Dorsolateral prefrontal cortex (tissue), 120 donors: ENCODE measurements at regions of chr10 and their contacts with region 1.

Region 1: DNA sequence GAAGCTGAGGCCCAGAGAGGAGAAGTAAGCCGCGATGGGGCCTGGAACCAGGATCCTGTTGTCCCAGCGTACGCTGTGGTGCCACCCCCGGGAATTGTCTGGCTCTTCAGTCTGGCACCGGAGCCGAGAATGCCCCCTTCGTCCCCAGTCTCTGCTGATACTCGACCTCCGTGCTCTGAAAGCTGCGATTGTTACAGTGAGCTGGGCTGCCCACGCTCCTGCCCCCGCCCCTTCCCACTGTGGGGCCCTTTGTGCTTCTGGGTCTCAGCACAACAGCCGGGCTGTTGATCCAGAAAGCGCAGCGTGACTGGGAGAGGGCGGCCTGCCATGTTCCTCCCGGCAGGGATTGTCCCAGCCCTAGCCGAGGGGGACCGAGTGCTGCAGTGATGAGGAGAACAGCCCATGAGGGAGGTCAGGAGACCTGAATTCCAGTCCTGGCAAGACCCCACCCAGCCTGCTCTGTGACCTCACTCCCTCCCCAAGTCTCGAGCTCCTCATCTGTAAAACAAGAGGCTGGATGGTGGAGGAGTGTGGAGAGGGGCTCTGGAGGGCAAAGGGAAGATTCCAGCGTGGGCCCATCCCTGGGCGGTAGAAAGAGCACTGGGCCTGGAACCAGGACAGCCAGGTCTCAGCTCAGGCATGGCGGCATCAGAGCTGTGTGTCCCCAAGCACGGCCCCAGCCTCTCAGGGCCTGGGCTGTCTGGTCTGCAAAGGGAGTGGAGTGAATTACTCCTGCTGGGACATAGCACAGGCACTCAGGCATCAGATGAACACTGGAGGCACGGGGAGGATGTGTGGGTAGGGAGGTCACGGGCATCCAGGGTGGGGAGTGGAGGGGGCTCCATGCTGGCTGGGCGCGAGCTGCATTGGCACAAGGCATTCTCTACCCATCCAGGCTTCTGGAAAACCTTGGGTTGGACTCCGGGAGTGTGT is 43.6 kb downstream of the TSPAN15 start:
- DNase-seq: peak; percentile 63 to 99 (median 96)
- H3K4me3 ChIP-seq: peak overlapping the region in 13 of 59 donors; percentile 0 to 37 (median 13)
- H3K27ac ChIP-seq: peak overlapping the region; percentile 87 to 100 (median 98)
- H3K27me3 ChIP-seq: no peaks in the 10 kb centered on the region
- CTCF ChIP-seq: peak in 24 of 56 donors; percentile 4 to 39 (median 21)

Region 2: GRCh38 chr10:69428165-69428564 is 66.7 kb before region 1 on chr10:
- intact Hi-C with region 1: no loop called
- DNase-seq: no peak
- H3K4me3 ChIP-seq: no peak overlapping the region
- H3K27ac ChIP-seq: no peak overlapping the region
- H3K27me3 ChIP-seq: no peaks in the 10 kb centered on the region
- CTCF ChIP-seq: no peak

Region 3: DNA sequence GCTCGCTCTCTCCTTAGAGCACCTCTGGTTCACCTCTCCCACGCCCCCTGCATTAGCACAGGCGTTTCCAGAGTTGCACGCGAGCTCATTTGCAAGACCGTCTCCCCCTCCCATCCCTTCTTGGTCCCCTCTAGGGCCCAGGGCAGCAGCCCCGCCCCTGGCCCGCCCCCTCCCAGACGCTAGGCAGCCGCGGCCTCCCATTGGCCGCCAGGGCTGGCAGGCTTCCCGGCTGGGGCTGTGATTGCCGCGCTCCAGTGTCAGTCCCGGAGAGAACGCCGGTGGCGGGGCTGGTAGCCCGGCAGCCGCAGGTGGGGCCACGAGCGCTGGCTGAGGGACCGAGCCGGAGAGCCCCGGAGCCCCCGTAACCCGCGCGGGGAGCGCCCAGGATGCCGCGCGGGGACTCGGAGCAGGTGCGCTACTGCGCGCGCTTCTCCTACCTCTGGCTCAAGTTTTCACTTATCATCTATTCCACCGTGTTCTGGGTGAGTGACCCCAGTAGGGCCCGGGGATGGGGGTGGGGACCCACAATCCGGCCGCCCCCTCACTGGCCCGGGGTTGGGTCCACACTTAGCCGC is 43.6 kb before region 1 on chr10 and contains the start of gene TSPAN15:
- intact Hi-C with region 1: loop called (anchors 2 to 5 kb)
- DNase-seq: peak; percentile 91 to 97 (median 94)
- H3K4me3 ChIP-seq: peak within 1 kb of the TSS; percentile 69 to 100 (median 92)
- H3K27ac ChIP-seq: peak within 1 kb of the TSS in 58 of 59 donors; percentile 29 to 97 (median 82)
- H3K27me3 ChIP-seq: no peaks in the 10 kb centered on the region
- CTCF ChIP-seq: peak in 38 of 56 donors; percentile 10 to 59 (median 34)
- total RNA-seq, gene TSPAN15: 8.7 to 188 (median 44.2) TPM